ENCODE measurements at regions of chr12 and their contacts with region 1.

Region 1: DNA sequence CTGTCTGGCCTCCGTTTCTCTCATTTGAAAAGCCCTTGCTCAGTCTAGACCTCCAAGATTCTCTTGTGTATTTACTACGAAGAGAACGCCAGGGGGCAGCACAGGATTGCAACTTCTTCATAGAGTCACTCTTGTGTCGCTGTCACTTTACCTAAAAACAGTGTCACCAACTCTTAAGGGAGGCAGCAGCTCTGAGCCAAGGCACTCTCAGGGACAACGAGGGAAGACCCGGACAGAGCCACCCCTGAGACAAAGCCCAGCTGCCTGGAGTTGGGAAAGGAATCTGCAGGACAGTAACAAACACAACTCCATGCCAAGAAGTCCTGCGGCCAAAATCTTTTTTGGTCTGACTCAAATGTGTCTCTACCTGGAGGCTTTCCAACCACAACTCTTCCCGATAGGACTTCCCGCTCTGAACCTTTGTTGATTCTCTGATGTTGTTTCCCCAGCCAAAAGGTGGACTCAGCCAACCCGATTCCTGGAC is 9.6 kb upstream of the RPAP3 start:
- DNase-seq: peak; percentile 75
- ATAC-seq: peak; percentile 68

Region 2: DNA sequence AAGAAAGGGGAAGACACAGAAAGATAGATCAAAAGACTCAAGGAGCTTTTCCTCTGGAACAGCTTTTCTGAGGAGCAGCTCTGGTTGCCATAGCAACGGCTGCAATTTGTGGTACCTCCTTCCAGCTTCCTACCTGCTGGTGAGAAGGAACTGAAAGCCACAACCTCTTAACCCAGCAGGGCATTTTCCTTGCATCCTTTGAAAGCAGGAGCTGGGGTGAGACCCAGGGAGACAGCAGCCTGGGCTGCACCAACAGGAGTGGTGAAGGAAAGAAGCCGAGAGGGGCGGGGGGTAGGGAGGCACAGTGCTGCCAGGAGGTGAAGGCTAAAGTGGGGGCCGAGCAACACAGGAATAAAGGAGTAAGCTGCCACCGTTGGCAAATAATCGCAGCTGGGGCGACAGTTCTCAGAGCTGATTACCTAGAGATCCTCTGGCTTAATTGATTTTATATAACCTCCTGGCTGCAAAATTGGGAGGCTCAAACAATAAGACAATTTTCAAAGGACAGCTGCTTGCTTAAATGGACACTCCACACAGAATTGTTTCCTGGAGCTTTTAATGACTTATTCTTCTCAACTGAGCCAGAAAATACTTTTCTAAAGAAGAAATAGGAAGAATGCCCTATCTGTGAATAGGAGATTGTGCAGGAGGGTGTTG is 139.0 kb before region 1 on chr12:
- intact Hi-C with region 1: no loop called
- DNase-seq: no peak
- ATAC-seq: no peak

Region 3: GRCh38 chr12:47767216-47767724 is 51.8 kb after region 1 on chr12:
- intact Hi-C with region 1: loop called (anchors 2 kb)
- DNase-seq: peak; percentile 45
- ATAC-seq: peak; percentile 55

Region 4: GRCh38 chr12:47779301-47779942 is 64.0 kb after region 1 on chr12:
- intact Hi-C with region 1: loop called (anchors 2 kb)
- DNase-seq: peak; percentile 93
- ATAC-seq: peak; percentile 76

Region 5: GRCh38 chr12:47837190-47838171 is 122.0 kb after region 1 on chr12:
- intact Hi-C with region 1: loop called (anchors 2 kb)
- DNase-seq: peak; percentile 74
- ATAC-seq: peak; percentile 89